CD4-positive, alpha-beta memory T cell (primary cell): ENCODE measurements at regions of chr5 and their contacts with region 1.

Region 1: GRCh38 chr5:176415952-176416924 is at the start of gene CLTB:
- DNase-seq: peak; percentile 83 to 85 (median 84)
- H3K4me3 ChIP-seq: peak within 1 kb of the TSS; percentile 68 to 69
- H3K4me3 Mint-ChIP-seq: peak within 1 kb of the TSS; percentile 83 to 92 (median 88)
- H3K27ac ChIP-seq: peak within 1 kb of the TSS; percentile 77
- H3K27ac Mint-ChIP-seq: peak within 1 kb of the TSS; percentile 85 to 95 (median 91)
- H3K4me1 ChIP-seq: peaks cover 39% of the 10 kb centered on the region
- H3K4me1 Mint-ChIP-seq: peaks cover 27 to 51% (median 39%) of the 10 kb centered on the region in 4 donors
- H3K27me3 ChIP-seq: no peaks in the 10 kb centered on the region
- H3K27me3 Mint-ChIP-seq: peaks cover 0 to 4% of the 10 kb centered on the region in 2 donors
- total RNA-seq, gene CLTB: 34.8 to 40.5 TPM

Region 2: DNA sequence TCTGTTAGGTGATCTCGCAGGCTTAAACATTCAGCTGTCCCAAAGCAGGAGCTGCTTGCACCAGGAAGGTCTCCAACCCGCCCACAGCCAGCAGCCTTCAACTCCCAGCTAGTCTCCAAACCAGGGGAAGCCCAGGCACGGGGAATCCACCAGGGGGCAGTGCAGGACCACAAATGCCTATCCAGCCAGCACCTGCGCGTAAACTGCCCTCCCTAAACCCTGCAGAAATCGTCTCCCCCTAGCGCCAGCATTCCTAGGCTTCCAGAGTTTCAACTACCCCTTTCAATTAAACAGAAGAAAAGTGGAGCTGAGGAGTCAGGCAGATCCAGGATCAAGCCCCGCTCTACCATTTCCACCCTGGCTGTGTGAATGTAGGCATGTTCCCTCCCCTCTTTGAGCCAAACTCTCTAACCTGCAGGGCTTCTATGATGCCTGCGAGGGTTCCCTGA is 686.4 kb before region 1 on chr5:
- CTCF ChIA-PET with region 1: interaction called, 9 read pairs
- POLR2A ChIA-PET with region 1: no interaction called
- intact Hi-C with region 1: loop called (anchors 1 kb)
- DNase-seq: peak; percentile 82 to 89 (median 87)
- H3K4me3 ChIP-seq: no peak overlapping the region
- H3K4me3 Mint-ChIP-seq: peak overlapping the region in 1 of 8 donors; percentile 54
- H3K27ac ChIP-seq: no peak overlapping the region
- H3K27ac Mint-ChIP-seq: peak overlapping the region in 3 of 7 donors; percentile 14 to 46 (median 44)
- H3K4me1 ChIP-seq: peaks cover 5% of the 10 kb centered on the region
- H3K4me1 Mint-ChIP-seq: peaks cover 4 to 7% (median 7%) of the 10 kb centered on the region in 4 donors
- H3K27me3 ChIP-seq: peaks cover 4% of the 10 kb centered on the region
- H3K27me3 Mint-ChIP-seq: peaks cover 14 to 18% of the 10 kb centered on the region in 2 donors

Region 3: DNA sequence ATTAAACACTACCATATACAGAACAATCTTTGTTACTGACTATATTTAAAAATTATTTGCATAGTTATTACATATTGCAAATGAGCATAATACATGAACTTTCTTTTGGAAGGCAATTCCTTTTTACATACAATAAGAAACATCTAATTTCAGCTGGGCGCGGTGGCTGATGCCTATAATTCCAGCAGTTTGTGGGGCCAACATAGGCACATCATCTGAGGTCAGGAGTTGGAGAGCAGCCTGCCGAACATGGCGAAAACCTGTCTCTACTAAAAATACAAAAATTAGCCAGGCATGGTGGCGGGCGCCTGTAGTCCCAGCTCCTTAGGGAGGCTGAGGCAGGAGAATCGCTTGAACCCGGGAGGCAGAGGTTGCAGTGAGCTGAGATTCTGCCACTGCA is 214.4 kb before region 1 on chr5:
- CTCF ChIA-PET with region 1: no interaction called
- POLR2A ChIA-PET with region 1: no interaction called
- intact Hi-C with region 1: no loop called
- DNase-seq: no peak
- H3K4me3 ChIP-seq: no peak overlapping the region
- H3K4me3 Mint-ChIP-seq: no peak overlapping the region
- H3K27ac ChIP-seq: no peak overlapping the region
- H3K27ac Mint-ChIP-seq: no peak overlapping the region
- H3K4me1 ChIP-seq: no peaks in the 10 kb centered on the region
- H3K4me1 Mint-ChIP-seq: peaks cover 1 to 7% (median 3%) of the 10 kb centered on the region in 4 donors
- H3K27me3 ChIP-seq: no peaks in the 10 kb centered on the region
- H3K27me3 Mint-ChIP-seq: peaks cover 8 to 15% of the 10 kb centered on the region in 2 donors

Region 4: DNA sequence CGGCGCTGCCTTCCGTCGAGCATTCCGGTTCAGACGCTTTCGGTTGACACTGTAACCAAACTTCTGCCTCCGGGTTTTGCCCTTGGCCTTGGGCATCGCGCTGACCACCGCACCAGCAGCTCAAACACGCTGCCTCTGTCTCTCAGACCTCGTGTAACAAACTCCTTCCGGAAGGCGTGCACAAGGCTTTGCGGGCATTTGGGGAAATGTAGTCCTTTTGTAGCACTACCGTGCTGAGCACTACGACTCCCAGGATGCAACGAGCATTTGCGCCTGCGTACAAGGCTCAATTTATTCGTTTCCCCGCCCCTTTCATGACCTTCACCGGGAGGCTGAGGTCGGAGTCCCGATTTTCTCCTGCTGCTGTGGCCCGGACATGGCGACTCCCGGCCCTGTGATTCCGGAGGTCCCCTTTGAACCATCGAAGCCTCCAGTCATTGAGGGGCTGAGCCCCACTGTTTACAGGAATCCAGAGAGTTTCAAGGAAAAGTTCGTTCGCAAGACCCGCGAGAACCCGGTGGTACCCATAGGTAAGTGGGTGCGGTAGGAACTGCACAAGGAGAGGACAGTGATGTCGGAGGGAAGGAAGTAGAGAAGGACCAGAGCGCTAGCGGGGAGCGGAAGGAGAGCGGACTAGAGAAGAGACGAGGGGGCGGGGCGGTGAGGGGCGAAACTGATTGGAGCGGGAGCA is 27.6 kb before region 1 on chr5 and contains the starts of genes HIGD2A and NOP16:
- CTCF ChIA-PET with region 1: interaction called, 3 read pairs
- POLR2A ChIA-PET with region 1: interaction called, 10 read pairs
- intact Hi-C with region 1: loop called (anchors 1 kb)
- DNase-seq: peak; percentile 98 to 100 (median 99)
- H3K4me3 ChIP-seq: peak within 1 kb of the TSS; percentile 90 to 99
- H3K4me3 Mint-ChIP-seq: peak within 1 kb of the TSS; percentile 95 to 100 (median 97)
- H3K27ac ChIP-seq: peak within 1 kb of the TSS; percentile 91
- H3K27ac Mint-ChIP-seq: peak within 1 kb of the TSS; percentile 96 to 100 (median 100)
- H3K4me1 ChIP-seq: peaks cover 33% of the 10 kb centered on the region
- H3K4me1 Mint-ChIP-seq: peaks cover 17 to 45% (median 30%) of the 10 kb centered on the region in 4 donors
- H3K27me3 ChIP-seq: no peaks in the 10 kb centered on the region
- H3K27me3 Mint-ChIP-seq: no peaks in the 10 kb centered on the region
- total RNA-seq, gene HIGD2A: 81.3 to 83.4 TPM
- total RNA-seq, gene NOP16: 16.9 to 19.4 TPM

Region 5: GRCh38 chr5:176537608-176538504 is 121.6 kb after region 1 on chr5:
- CTCF ChIA-PET with region 1: interaction called, 26 read pairs
- POLR2A ChIA-PET with region 1: interaction called, 84 read pairs
- intact Hi-C with region 1: loop called (anchors 1 kb)
- DNase-seq: peak; percentile 94 to 100 (median 98)
- H3K4me3 ChIP-seq: peak overlapping the region; percentile 85 to 100
- H3K4me3 Mint-ChIP-seq: peak overlapping the region; percentile 97 to 100 (median 98)
- H3K27ac ChIP-seq: peak overlapping the region; percentile 98
- H3K27ac Mint-ChIP-seq: peak overlapping the region; percentile 99 to 100 (median 100)
- H3K4me1 ChIP-seq: peaks cover 70% of the 10 kb centered on the region
- H3K4me1 Mint-ChIP-seq: peaks cover 55 to 86% (median 66%) of the 10 kb centered on the region in 4 donors
- H3K27me3 ChIP-seq: no peaks in the 10 kb centered on the region
- H3K27me3 Mint-ChIP-seq: no peaks in the 10 kb centered on the region

Region 6: DNA sequence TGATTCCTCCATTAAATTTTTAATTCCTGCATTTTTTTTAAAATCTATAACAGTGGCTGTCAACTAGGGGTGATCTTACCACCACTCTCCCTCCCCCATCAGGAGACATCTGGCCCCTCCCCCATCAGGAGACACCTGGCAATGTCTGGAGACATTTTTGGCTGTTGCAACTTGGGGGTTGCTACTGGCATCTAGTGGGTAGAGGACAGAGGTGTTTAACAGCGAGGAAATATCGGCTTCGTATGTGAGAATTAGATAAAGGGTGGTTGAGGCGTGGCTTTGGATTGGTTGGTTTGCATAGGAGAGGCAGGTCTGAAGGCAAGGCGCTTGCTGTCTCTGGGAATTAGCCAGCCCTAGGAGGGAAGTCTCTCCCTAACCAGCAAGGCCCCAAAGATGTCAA is 143.4 kb after region 1 on chr5:
- CTCF ChIA-PET with region 1: interaction called, 4 read pairs
- POLR2A ChIA-PET with region 1: no interaction called
- intact Hi-C with region 1: loop called (anchors 1 kb)
- DNase-seq: peak in 3 of 5 donors; percentile 25 to 36 (median 28)
- H3K4me3 ChIP-seq: no peak overlapping the region
- H3K4me3 Mint-ChIP-seq: peak overlapping the region in 1 of 8 donors; percentile 0
- H3K27ac ChIP-seq: no peak overlapping the region
- H3K27ac Mint-ChIP-seq: peak overlapping the region in 4 of 7 donors; percentile 19 to 52 (median 49)
- H3K4me1 ChIP-seq: peaks cover 30% of the 10 kb centered on the region
- H3K4me1 Mint-ChIP-seq: peaks cover 16 to 43% (median 26%) of the 10 kb centered on the region in 4 donors
- H3K27me3 ChIP-seq: no peaks in the 10 kb centered on the region
- H3K27me3 Mint-ChIP-seq: peaks cover 0 to 2% of the 10 kb centered on the region in 2 donors

Region 7: DNA sequence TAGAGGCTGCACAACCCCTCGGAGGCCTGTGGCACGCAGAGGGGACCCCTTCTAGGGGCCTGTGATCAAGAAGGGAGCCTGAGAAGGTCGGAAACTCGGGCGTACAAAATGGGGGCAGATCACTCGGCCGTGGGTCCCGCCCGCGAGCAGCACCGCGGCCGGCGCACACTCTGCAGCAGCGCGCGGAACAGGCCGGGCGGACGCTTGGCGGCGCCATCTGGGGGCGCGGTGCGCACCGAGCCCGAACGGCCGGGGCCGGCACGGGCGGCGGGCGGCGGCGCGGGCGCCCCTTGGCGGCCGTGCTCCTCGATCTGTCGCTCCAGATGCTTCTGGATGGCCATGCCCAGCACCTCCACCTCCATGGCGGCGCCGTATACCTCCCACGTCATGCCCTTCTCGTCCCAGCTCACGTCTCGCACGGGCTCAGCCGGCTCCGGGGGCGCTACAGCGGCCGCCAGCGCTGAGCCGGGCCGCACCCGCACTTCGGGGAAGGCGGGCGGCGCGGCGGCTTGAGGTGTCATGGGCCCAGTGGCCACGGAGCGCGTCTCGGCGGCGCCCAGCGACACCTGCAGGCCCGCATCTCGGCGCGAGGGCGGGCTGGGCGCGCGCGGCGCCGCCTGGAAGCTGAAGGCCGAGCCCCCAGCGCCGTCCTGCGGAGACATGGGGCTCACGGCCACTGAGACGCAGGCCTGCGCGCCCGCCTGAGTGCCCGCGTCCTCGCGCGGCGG is 180.6 kb after region 1 on chr5:
- CTCF ChIA-PET with region 1: interaction called, 18 read pairs
- POLR2A ChIA-PET with region 1: interaction called, 13 read pairs
- intact Hi-C with region 1: loop called (anchors 1 kb)
- DNase-seq: peak; percentile 66 to 75 (median 73)
- H3K4me3 ChIP-seq: peak overlapping the region in 1 of 2 donors; percentile 37
- H3K4me3 Mint-ChIP-seq: peak overlapping the region; percentile 78 to 89 (median 82)
- H3K27ac ChIP-seq: no peak overlapping the region
- H3K27ac Mint-ChIP-seq: peak overlapping the region in 2 of 7 donors; percentile 75 to 77
- H3K4me1 ChIP-seq: peaks cover 6% of the 10 kb centered on the region
- H3K4me1 Mint-ChIP-seq: peaks cover 0 to 9% (median 6%) of the 10 kb centered on the region in 4 donors
- H3K27me3 ChIP-seq: no peaks in the 10 kb centered on the region
- H3K27me3 Mint-ChIP-seq: no peaks in the 10 kb centered on the region

Region 8: GRCh38 chr5:176660860-176661641 is 244.8 kb after region 1 on chr5:
- CTCF ChIA-PET with region 1: interaction called, 5 read pairs
- POLR2A ChIA-PET with region 1: interaction called, 6 read pairs
- intact Hi-C with region 1: loop called (anchors 2 kb)
- DNase-seq: peak in 4 of 5 donors; percentile 76 to 78 (median 77)
- H3K4me3 ChIP-seq: no peak overlapping the region
- H3K4me3 Mint-ChIP-seq: peak overlapping the region in 4 of 8 donors; percentile 13 to 78 (median 23)
- H3K27ac ChIP-seq: no peak overlapping the region
- H3K27ac Mint-ChIP-seq: peak overlapping the region in 4 of 7 donors; percentile 37 to 90 (median 72)
- H3K4me1 ChIP-seq: peaks cover 33% of the 10 kb centered on the region
- H3K4me1 Mint-ChIP-seq: peaks cover 23 to 35% (median 31%) of the 10 kb centered on the region in 4 donors
- H3K27me3 ChIP-seq: no peaks in the 10 kb centered on the region
- H3K27me3 Mint-ChIP-seq: peaks cover 5 to 13% of the 10 kb centered on the region in 2 donors

Region 9: DNA sequence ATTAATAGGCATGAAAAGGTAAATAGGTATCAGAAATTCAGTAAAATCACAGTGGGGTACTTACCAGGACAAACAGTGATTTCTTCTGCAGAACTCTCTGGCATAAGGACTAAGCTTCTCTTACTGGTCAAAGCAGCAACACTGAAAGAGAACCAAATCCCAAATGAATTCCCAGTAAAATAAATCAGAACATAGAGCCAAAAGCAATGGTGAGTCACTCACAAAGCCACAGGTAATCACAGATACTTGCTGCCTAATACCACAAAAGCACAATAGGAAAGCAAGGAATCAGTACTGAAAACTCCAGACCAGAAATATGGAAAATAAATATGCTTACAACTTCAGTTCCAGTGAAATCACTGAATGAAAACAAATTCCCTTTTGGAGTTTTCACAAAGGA is 539.7 kb after region 1 on chr5:
- CTCF ChIA-PET with region 1: no interaction called
- POLR2A ChIA-PET with region 1: no interaction called
- intact Hi-C with region 1: no loop called
- DNase-seq: no peak
- H3K4me3 ChIP-seq: no peak overlapping the region
- H3K4me3 Mint-ChIP-seq: no peak overlapping the region
- H3K27ac ChIP-seq: no peak overlapping the region
- H3K27ac Mint-ChIP-seq: peak overlapping the region in 2 of 7 donors; percentile 61 to 65
- H3K4me1 ChIP-seq: no peaks in the 10 kb centered on the region
- H3K4me1 Mint-ChIP-seq: peaks cover 5 to 6% (median 6%) of the 10 kb centered on the region in 4 donors
- H3K27me3 ChIP-seq: no peaks in the 10 kb centered on the region
- H3K27me3 Mint-ChIP-seq: no peaks in the 10 kb centered on the region

Region 10: DNA sequence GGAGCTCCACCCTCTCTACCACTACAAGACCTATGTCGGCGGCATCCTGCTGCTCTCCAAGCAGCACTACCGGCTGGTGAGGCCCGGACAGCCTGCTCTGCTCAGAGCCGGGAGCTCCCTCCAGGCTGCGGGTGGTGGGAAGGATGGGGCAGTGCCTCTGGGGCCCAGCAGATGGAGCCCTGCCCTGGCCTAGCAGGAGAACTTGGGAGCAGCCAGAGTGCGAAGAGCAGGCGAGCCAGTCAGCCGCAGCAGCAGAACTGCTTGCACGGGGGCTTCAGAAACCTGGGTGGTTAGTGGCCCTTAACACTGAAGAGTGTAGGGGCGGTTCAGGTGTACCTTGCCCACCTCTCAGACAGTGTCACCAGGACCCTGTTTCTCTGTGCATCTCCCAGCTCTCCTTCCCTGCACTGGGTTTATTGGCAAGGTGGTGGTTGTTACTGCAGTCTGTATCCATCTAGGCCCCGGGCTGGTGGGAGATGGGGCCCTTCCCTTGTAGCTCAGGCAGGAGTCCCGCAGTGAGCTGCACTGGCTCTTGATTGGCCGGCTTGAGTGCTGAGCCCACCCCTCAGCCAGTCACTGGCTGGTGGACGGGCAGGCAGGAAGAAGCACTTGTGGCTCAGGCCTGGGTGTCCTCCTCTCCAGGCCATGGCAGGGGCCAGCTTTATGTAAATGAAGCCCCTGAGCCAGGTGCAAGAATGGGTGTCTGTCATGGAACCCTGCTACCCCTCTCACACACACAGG is 1191.4 kb after region 1 on chr5:
- CTCF ChIA-PET with region 1: no interaction called
- POLR2A ChIA-PET with region 1: no interaction called
- intact Hi-C with region 1: no loop called
- DNase-seq: peak; percentile 50 to 58 (median 55)
- H3K4me3 ChIP-seq: no peak overlapping the region
- H3K4me3 Mint-ChIP-seq: peak overlapping the region in 1 of 8 donors; percentile 10
- H3K27ac ChIP-seq: no peak overlapping the region
- H3K27ac Mint-ChIP-seq: peak overlapping the region in 3 of 7 donors; percentile 22 to 68 (median 30)
- H3K4me1 ChIP-seq: peaks cover 5% of the 10 kb centered on the region
- H3K4me1 Mint-ChIP-seq: peaks cover 10 to 20% (median 16%) of the 10 kb centered on the region in 4 donors
- H3K27me3 ChIP-seq: no peaks in the 10 kb centered on the region
- H3K27me3 Mint-ChIP-seq: no peaks in the 10 kb centered on the region